ENCODE measurements at regions of chr1 and their contacts with region 1.

Region 1: GRCh38 chr1:209692745-209693504 is 11.7 kb upstream of the HSD11B1 start:
- DNase-seq: peak; percentile 76 to 83
- H3K4me3 ChIP-seq: no peak overlapping the region
- H3K4me3 Mint-ChIP-seq: no peak overlapping the region
- H3K27ac Mint-ChIP-seq: no peak overlapping the region
- H3K4me1 ChIP-seq: peaks cover 16% of the 10 kb centered on the region
- H3K4me1 Mint-ChIP-seq: peaks cover 25% of the 10 kb centered on the region
- H3K27me3 ChIP-seq: no peaks in the 10 kb centered on the region
- H3K27me3 Mint-ChIP-seq: peaks cover 19% of the 10 kb centered on the region
- CTCF ChIP-seq: peak; percentile 80 to 89

Region 2: DNA sequence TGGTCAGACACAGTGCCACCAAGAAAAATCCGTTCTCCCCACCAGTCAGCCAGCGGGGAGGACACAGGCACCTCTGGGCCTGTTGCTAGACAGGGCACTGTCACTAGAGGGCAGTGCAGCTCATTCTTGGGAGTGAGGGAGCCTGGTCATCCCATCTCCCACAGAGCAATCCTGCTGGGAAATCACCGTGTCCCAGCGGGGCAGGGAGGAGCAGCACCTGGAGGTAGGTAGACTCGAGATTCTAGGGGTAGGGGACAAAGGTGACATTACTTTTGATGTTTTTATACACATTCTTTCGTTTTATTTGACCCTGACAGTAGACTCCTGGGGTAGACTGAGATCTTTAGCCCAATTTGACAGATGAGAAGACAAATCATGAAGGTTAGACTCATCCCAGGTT is 116.1 kb before region 1 on chr1:
- CTCF ChIA-PET with region 1: interaction called, 4 read pairs
- POLR2A ChIA-PET with region 1: no interaction called
- intact Hi-C with region 1: loop called (anchors 1 kb)
- DNase-seq: peak; percentile 83 to 89
- H3K4me3 ChIP-seq: no peak overlapping the region
- H3K4me3 Mint-ChIP-seq: no peak overlapping the region
- H3K27ac Mint-ChIP-seq: no peak overlapping the region
- H3K4me1 ChIP-seq: no peaks in the 10 kb centered on the region
- H3K4me1 Mint-ChIP-seq: peaks cover 6% of the 10 kb centered on the region
- H3K27me3 ChIP-seq: no peaks in the 10 kb centered on the region
- H3K27me3 Mint-ChIP-seq: peaks cover 11% of the 10 kb centered on the region
- CTCF ChIP-seq: peak; percentile 84 to 95

Region 3: DNA sequence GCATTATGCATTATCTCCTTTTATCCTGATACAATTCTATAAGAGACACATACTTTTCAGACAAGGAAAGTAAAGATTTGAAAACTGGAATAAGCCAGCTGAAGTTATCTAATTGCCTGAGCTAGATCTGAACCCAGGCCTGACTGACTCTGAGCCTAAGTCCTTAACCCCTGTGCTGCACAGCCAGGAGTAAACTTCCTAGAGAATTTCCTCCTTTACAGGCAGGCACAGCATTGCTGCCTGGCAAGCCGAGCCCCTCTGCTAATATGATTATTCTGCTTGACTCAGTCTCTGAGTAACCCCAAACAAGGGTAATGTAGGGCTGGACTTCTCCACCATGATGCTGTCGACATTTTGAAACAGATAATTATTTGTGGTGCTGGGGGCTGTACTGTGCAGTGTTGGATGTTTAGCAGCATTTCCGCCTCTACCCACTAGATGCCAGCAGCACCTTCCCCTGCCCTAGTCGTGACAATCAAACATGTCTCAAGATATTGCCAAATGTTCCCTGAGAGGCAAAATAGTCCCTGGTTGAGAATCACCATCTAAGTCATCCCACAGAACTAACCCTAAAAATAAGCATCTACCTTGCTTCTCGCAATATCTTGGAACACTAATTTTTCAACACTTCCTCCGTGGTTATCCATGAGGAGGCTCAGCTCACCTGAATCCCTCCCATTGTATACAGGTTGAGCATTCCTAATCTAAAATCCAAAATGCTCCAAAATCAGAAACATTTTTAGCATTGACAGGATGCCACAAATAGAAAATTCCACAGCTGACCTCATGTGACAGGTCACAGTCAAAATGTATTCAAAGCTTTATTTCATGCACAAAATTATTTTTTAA is 90.9 kb before region 1 on chr1:
- CTCF ChIA-PET with region 1: interaction called, 6 read pairs
- POLR2A ChIA-PET with region 1: no interaction called
- intact Hi-C with region 1: loop called (anchors 1 kb)
- DNase-seq: peak in 1 of 2 experiments; percentile 47
- H3K4me3 ChIP-seq: no peak overlapping the region
- H3K4me3 Mint-ChIP-seq: no peak overlapping the region
- H3K27ac Mint-ChIP-seq: no peak overlapping the region
- H3K4me1 ChIP-seq: no peaks in the 10 kb centered on the region
- H3K4me1 Mint-ChIP-seq: no peaks in the 10 kb centered on the region
- H3K27me3 ChIP-seq: no peaks in the 10 kb centered on the region
- H3K27me3 Mint-ChIP-seq: peaks cover 8% of the 10 kb centered on the region
- CTCF ChIP-seq: peak; percentile 75 to 80

Region 4: GRCh38 chr1:209627732-209628196 is 65.2 kb before region 1 on chr1:
- CTCF ChIA-PET with region 1: interaction called, 3 read pairs
- POLR2A ChIA-PET with region 1: no interaction called
- intact Hi-C with region 1: loop called (anchors 1 kb)
- DNase-seq: peak; percentile 53 to 74
- H3K4me3 ChIP-seq: no peak overlapping the region
- H3K4me3 Mint-ChIP-seq: no peak overlapping the region
- H3K27ac Mint-ChIP-seq: no peak overlapping the region
- H3K4me1 ChIP-seq: no peaks in the 10 kb centered on the region
- H3K4me1 Mint-ChIP-seq: no peaks in the 10 kb centered on the region
- H3K27me3 ChIP-seq: no peaks in the 10 kb centered on the region
- H3K27me3 Mint-ChIP-seq: no peaks in the 10 kb centered on the region
- CTCF ChIP-seq: peak; percentile 93 to 94

Region 5: DNA sequence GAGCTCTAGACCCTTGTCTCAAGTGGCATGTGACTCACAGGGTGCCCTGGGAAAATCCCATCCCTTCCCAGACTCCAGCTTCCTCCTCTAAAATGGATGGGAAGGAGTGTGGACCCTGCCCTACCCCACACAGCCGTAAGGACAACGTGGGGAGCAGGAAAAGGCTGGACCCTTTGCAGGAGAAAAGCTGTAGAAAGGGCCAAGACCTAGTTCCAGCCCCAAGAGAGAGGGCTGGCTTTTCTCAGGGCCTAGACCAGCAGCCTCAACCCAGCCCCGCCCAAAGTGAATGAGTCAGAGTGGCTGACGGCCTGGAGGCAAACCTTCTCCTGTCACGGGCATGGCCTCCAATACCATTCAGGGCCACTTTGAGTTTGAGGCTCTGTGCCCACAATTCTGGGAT is 41.8 kb before region 1 on chr1:
- CTCF ChIA-PET with region 1: interaction called, 6 read pairs
- POLR2A ChIA-PET with region 1: interaction called, 3 read pairs
- intact Hi-C with region 1: loop called (anchors 1 kb)
- DNase-seq: peak; percentile 68 to 75
- H3K4me3 ChIP-seq: peak overlapping the region; percentile 57
- H3K4me3 Mint-ChIP-seq: peak overlapping the region; percentile 96
- H3K27ac Mint-ChIP-seq: peak overlapping the region; percentile 88
- H3K4me1 ChIP-seq: peaks cover 70% of the 10 kb centered on the region
- H3K4me1 Mint-ChIP-seq: peaks cover 56% of the 10 kb centered on the region
- H3K27me3 ChIP-seq: no peaks in the 10 kb centered on the region
- H3K27me3 Mint-ChIP-seq: no peaks in the 10 kb centered on the region
- CTCF ChIP-seq: no peak

Region 6: DNA sequence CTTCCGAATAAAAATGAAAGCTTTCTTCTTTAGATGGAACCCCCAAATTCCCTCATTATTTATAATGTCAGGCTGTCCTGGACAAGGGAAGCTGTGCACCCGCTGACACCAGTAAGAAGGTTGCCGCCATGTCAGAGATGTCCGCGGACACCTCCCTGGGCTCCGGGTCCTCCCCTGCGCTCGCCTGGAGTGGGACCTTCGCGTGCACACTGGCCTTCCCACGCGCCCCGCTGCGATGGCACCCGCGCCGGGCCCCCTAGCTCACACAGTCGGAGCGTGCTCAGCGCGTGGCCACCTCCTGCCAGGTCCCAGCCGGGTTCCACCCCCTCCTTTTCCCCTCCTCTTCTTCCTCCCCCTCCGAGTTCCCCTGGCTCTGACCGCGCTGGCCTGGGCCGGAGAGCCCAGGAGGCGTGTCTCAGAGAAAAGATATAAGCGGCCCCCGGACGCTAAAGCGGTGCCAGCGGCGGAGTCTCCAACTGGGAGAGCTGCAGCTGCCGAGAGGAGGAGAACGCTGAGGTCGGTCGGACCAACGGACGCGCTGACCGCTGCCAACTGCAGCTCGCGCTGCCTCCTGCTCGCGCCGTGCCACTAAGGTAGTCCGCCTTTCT is 17.9 kb before region 1 on chr1 and contains the start of gene G0S2:
- CTCF ChIA-PET with region 1: no interaction called
- POLR2A ChIA-PET with region 1: no interaction called
- intact Hi-C with region 1: loop called (anchors 2 kb)
- DNase-seq: peak; percentile 80 to 83
- H3K4me3 ChIP-seq: peak within 1 kb of the TSS; percentile 81
- H3K4me3 Mint-ChIP-seq: peak within 1 kb of the TSS; percentile 94
- H3K27ac Mint-ChIP-seq: peak within 1 kb of the TSS; percentile 81
- H3K4me1 ChIP-seq: peaks cover 12% of the 10 kb centered on the region
- H3K4me1 Mint-ChIP-seq: peaks cover 41% of the 10 kb centered on the region
- H3K27me3 ChIP-seq: no peaks in the 10 kb centered on the region
- H3K27me3 Mint-ChIP-seq: no peaks in the 10 kb centered on the region
- CTCF ChIP-seq: no peak
- total RNA-seq, gene G0S2: 40.4 and 45.7 TPM in 2 replicates

Region 7: GRCh38 chr1:209747580-209748262 is 54.8 kb after region 1 on chr1:
- CTCF ChIA-PET with region 1: no interaction called
- POLR2A ChIA-PET with region 1: no interaction called
- intact Hi-C with region 1: loop called (anchors 2 kb)
- DNase-seq: peak; percentile 93 to 96
- H3K4me3 ChIP-seq: no peak overlapping the region
- H3K4me3 Mint-ChIP-seq: peak overlapping the region; percentile 51
- H3K27ac Mint-ChIP-seq: peak overlapping the region; percentile 53
- H3K4me1 ChIP-seq: peaks cover 19% of the 10 kb centered on the region
- H3K4me1 Mint-ChIP-seq: peaks cover 16% of the 10 kb centered on the region
- H3K27me3 ChIP-seq: no peaks in the 10 kb centered on the region
- H3K27me3 Mint-ChIP-seq: no peaks in the 10 kb centered on the region
- CTCF ChIP-seq: peak; percentile 62 to 83